A549 (cell line): ENCODE measurements at regions of chr6 and their contacts with region 1.

Region 1: DNA sequence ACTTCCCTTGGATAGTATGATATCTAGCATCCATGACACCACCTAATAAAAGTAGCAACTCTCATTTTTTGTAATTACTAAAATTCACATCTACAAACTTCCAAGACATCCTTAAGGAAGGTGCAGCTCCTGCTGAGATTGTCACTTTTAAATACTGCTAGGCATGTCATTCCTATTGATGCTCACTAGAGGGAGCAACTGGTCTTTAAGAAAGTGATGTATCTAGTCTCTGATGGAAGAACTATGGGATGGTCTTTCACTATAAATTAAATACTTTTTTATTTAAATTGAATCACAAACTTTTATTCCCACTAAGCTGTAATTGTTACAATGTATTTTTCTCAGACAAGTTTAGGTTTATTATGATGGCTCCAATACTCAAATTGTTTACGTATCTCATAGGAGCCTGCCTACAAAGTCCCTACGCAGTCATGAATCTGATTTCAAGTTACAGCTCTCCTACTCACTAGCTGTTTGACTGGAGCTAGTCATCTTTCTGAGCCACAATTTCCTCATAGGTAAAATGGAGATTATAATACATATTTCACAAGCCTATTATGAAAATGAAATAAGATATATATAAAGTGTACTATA is 8.1 kb upstream of the TSPYL1 start:
- DNase-seq: peak in 1 of 2 experiments; percentile 61
- ATAC-seq: peak; percentile 56 to 86; a peak in 4 of 6 replicates
- H3K4me3 ChIP-seq: no peak overlapping the region
- H3K27ac ChIP-seq: no peak overlapping the region
- H3K4me1 ChIP-seq: no peaks in the 10 kb centered on the region
- CTCF ChIP-seq: peak; percentile 81
- EP300 ChIP-seq: no peak
- POLR2A ChIP-seq: no peak
- RAD21 ChIP-seq: peak; percentile 76 to 78

Region 2: GRCh38 chr6:116016846-116017545 is 270.8 kb before region 1 on chr6:
- CTCF ChIA-PET with region 1: no interaction called
- POLR2A ChIA-PET with region 1: no interaction called
- DNase-seq: peak in 1 of 2 experiments; percentile 28
- ATAC-seq: peak; percentile 62 to 75; a peak in 5 of 6 replicates
- H3K4me3 ChIP-seq: peak overlapping the region; percentile 15; the same call in 1 of the 3 replicates
- H3K27ac ChIP-seq: peak overlapping the region; percentile 68 to 74
- H3K4me1 ChIP-seq: peaks cover 82% of the 10 kb centered on the region
- CTCF ChIP-seq: no peak
- EP300 ChIP-seq: no peak
- POLR2A ChIP-seq: no peak
- RAD21 ChIP-seq: no peak

Region 3: DNA sequence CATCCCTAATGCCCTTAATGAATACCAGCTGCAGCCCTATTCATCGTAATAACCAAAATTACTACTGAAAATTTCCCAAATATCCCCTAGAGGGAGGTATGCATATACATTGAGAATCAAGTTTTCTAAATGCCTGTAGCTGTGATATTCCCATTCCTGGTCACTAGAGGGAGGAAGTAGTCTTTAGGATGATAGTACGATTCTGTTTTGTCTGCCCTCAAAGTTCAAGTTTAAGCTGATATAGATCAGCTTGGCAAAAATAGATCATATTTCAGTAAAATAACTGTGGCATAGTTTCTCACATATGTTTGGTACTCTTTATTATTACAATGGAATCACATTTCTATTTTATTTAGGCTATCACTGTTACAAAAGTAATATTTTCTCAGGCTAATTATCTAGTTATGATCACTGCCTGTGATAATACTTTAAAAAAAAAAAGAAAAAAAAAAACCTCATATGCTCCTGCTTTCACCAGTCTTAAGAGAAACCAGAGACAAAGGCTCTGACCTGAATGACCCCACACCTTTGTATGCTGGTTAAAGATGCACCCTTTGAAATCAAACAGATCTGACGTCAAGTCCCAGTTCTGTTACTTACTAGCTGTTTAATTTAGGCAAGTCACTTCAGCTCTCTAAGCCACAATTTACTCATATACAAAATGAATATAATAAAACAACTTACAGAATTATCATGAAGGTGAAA is 19.0 kb before region 1 on chr6:
- CTCF ChIA-PET with region 1: interaction called, 17 read pairs
- POLR2A ChIA-PET with region 1: no interaction called
- DNase-seq: peak; percentile 44 to 73
- ATAC-seq: peak; percentile 85 to 95
- H3K4me3 ChIP-seq: no peak overlapping the region
- H3K27ac ChIP-seq: no peak overlapping the region
- H3K4me1 ChIP-seq: peaks cover 8% of the 10 kb centered on the region; the same call in 1 of the 3 replicates
- CTCF ChIP-seq: peak; percentile 86
- EP300 ChIP-seq: no peak
- POLR2A ChIP-seq: no peak
- RAD21 ChIP-seq: peak; percentile 68 to 71

Region 4: DNA sequence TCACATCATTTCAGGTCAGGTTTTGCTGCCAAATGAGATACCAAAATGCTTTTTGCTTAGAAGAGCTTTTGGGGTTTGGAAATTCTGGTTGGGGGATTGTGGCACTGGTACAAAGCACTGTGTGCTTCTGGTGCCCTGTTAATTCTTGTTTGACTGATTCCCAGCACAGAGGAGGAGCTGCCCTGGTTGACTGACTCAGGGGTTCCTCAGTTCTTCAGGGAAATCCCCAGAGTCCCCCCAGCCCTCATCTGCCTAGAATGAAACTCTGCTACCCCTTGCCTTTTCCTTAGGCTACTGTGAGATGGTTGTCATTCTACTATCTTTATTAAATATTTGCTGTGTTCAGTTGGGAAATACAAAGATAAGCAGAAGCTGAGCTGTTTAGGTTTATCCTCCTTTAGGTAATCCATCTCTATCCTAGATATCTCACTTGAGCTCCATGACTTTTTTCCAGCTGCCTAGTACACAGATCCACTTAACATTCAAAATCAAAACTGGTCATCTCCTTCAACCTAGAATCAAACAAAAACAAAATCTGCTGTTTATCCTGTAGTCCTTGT is 16.8 kb after region 1 on chr6:
- CTCF ChIA-PET with region 1: interaction called, 15 read pairs
- POLR2A ChIA-PET with region 1: no interaction called
- DNase-seq: no peak
- ATAC-seq: no peak
- H3K4me3 ChIP-seq: no peak overlapping the region
- H3K27ac ChIP-seq: no peak overlapping the region
- H3K4me1 ChIP-seq: no peaks in the 10 kb centered on the region
- CTCF ChIP-seq: no peak
- EP300 ChIP-seq: no peak
- POLR2A ChIP-seq: no peak
- RAD21 ChIP-seq: no peak

Region 5: GRCh38 chr6:116446399-116446798 is 158.6 kb after region 1 on chr6:
- CTCF ChIA-PET with region 1: interaction called, 10 read pairs
- POLR2A ChIA-PET with region 1: no interaction called
- DNase-seq: no peak
- ATAC-seq: no peak
- H3K4me3 ChIP-seq: no peak overlapping the region
- H3K27ac ChIP-seq: no peak overlapping the region
- H3K4me1 ChIP-seq: peaks cover 22% of the 10 kb centered on the region
- CTCF ChIP-seq: no peak
- EP300 ChIP-seq: no peak
- POLR2A ChIP-seq: no peak
- RAD21 ChIP-seq: no peak

Region 6: GRCh38 chr6:116561377-116562018 is 273.7 kb after region 1 on chr6:
- CTCF ChIA-PET with region 1: interaction called, 24 read pairs
- POLR2A ChIA-PET with region 1: no interaction called
- DNase-seq: peak; percentile 9 to 55
- ATAC-seq: peak; percentile 55 to 76; a peak in 4 of 6 replicates
- H3K4me3 ChIP-seq: no peak overlapping the region
- H3K27ac ChIP-seq: no peak overlapping the region
- H3K4me1 ChIP-seq: peaks cover 26% of the 10 kb centered on the region
- CTCF ChIP-seq: peak; percentile 84
- EP300 ChIP-seq: no peak
- POLR2A ChIP-seq: no peak
- RAD21 ChIP-seq: peak; percentile 81